ENCODE measurements at regions of chr5 and their contacts with region 1.

Region 1: GRCh38 chr5:141650851-141651727 is at the start of gene FCHSD1:
- DNase-seq: peak; percentile 97
- H3K27ac ChIP-seq: peak within 1 kb of the TSS; percentile 46
- CTCF ChIP-seq: no peak

Region 2: DNA sequence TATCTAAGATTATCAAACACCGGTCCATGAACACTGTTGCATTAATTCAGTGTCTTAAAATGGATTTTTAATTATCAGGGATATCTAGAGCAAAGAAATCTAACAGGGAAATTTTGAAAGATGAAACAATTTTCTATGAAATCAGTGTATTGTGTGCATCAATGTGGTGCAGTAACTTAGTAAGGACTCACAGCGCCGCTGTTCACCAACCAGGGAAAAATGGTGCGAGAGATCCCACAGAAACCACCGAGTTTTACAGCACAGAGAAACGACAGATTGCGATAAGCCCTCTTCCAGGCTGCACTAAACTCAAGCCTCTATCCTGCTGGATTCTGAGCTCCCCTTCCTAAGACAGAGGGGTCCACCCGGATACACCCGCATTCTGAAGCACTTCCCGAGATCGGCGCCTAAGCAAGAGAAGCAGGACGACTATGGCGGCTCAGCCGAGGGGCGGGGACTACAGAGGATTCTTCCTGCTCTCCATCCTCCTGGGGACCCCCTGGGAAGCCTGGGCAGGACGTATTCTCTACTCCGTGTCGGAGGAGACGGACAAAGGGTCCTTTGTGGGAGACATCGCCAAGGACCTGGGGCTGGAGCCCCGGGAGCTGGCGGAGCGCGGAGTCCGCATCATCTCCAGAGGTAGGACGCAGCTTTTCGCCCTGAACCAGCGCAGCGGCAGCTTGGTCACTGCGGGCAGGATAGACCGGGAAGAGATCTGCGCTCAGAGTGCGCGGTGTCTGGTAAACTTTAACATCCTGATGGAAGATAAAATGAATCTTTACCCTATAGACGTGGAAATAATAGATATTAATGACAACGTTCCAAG is 268.4 kb before region 1 on chr5 and contains the start of gene PCDHGA7:
- CTCF ChIA-PET with region 1: no interaction called
- POLR2A ChIA-PET with region 1: no interaction called
- DNase-seq: peak; percentile 43
- H3K27ac ChIP-seq: no peak within 1 kb of the TSS
- CTCF ChIP-seq: peak; percentile 61

Region 3: GRCh38 chr5:141664732-141665461 is 13.8 kb after region 1 on chr5:
- CTCF ChIA-PET with region 1: interaction called, 11 read pairs
- POLR2A ChIA-PET with region 1: no interaction called
- DNase-seq: peak; percentile 73
- H3K27ac ChIP-seq: no peak overlapping the region
- CTCF ChIP-seq: peak; percentile 96

Region 4: DNA sequence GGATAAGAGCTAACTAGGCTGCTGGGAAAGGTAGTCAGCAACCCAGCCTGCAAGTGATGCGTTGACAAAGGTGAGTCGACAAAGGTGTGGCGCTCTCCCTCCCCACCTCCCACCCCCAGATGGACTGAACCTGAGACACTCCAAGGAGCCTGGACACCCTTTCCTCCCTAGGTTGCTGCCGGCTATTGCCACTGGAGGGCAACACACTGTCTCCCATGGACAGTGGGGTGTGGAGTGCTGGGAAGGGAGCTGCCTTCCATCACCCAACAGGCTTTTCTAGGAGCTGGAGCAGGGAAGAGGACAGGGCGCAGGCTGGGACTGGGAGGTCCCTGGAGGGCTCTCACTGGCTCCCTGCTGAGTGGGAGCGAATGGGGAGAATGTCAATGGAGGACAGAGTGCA is 106.3 kb after region 1 on chr5:
- CTCF ChIA-PET with region 1: no interaction called
- POLR2A ChIA-PET with region 1: no interaction called
- DNase-seq: peak; percentile 88
- H3K27ac ChIP-seq: no peak overlapping the region
- CTCF ChIP-seq: no peak; the same call in 1 of the 2 replicates

Region 5: GRCh38 chr5:142246258-142246657 is 595.2 kb after region 1 on chr5:
- CTCF ChIA-PET with region 1: no interaction called
- POLR2A ChIA-PET with region 1: no interaction called
- DNase-seq: peak; percentile 86
- H3K27ac ChIP-seq: peak overlapping the region; percentile 52
- CTCF ChIP-seq: no peak

Measured in RWPE1 (cell line).